Sigmoid colon (tissue), 7 donors: ENCODE measurements at regions of chr2 and their contacts with region 1.

Region 1: DNA sequence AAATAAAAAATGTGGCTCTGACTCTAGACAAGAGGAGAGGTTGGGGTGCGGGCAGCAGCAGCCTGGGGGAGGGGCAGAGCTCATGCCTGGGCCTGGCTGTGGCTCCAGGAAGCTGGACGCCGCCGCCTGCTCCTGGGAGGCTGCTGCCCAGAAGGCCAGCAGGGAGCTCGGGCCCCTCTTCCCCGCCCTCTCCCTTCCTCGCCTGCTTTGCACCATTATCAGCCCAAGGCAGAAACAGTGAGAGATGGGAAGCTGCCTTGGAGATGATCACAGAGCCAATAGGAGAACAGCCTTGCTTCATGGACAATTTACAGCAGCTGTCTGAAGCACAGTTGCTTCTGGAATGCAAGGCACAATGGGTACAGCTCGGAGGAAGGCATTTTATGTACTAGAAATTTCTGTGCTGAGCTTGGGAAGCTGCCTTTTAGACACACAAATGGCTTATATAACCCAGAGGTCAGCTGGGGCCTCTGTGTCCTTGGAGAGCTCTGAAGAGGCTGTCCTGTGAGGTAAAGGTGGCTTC is 55.3 kb upstream of the AFF3 start:
- DNase-seq: peak; percentile 81
- H3K4me3 ChIP-seq: peak overlapping the region in 1 of 4 donors; percentile 10
- H3K27ac ChIP-seq: peak overlapping the region; percentile 83 to 94 (median 85)
- H3K4me1 ChIP-seq: peaks cover 0 to 51% (median 38%) of the 10 kb centered on the region in 4 donors
- H3K27me3 ChIP-seq: no peaks in the 10 kb centered on the region
- CTCF ChIP-seq: no peak
- EP300 ChIP-seq: peak in 3 of 4 donors; percentile 19 to 68 (median 64)
- POLR2A ChIP-seq: no peak

Region 2: GRCh38 chr2:98598779-98599428 is 1598.8 kb before region 1 on chr2:
- intact Hi-C with region 1: no loop called
- DNase-seq: no peak
- H3K4me3 ChIP-seq: no peak overlapping the region
- H3K27ac ChIP-seq: no peak overlapping the region
- H3K4me1 ChIP-seq: no peaks in the 10 kb centered on the region
- H3K27me3 ChIP-seq: no peaks in the 10 kb centered on the region
- CTCF ChIP-seq: no peak
- EP300 ChIP-seq: no peak
- POLR2A ChIP-seq: no peak

Region 3: DNA sequence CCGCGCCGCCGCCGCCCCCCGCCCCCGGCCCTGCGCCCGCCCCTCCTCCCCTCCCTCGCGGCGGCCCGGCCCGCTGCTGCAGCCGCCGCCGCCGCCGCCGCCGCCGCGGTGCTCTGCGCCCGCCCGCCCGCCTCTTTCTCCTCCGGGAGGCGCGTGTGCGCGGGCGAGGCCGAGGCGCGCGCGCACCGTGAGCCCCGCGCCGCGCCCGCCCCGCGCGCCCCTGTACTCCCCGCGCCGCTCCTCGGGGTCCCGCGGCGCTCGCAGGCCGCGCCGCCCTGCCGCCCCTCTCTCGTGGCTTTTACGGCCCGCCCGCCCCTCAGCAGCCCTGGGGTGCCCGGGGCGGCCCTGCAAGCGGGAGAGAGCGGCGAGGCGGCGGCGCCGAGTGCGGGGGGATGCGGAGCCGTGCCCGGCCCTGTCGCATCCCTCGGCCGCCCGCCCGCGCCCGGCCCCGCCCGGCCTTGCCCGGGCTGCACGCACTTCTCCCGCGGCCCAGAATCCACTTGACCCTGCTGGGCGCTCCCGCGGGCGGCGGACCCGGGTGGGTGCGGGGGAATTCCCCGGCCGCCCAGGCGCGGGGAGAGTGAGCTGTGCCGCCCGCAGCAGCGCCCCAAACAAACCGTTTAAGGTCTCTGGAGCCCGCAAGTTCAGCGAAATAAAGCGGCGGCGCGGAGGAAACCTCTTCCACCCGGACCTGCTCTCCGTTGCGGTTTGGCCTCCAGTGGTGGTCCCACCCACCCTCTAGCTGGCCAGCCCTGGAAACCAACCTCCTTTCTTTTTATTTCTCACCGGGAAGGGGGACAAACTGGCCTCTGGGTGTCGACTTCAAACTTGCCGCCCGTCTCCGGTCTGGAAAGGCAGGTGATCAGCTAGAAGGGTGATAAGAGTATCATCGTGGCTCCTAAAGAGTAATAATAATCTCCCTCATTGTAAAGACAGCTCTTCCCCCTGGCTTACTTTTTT is 92.7 kb before region 1 on chr2:
- intact Hi-C with region 1: loop called (anchors 5 kb)
- DNase-seq: no peak
- H3K4me3 ChIP-seq: peak overlapping the region; percentile 40 to 77 (median 70)
- H3K27ac ChIP-seq: peak overlapping the region; percentile 76 to 80 (median 78)
- H3K4me1 ChIP-seq: peaks cover 0 to 38% (median 21%) of the 10 kb centered on the region in 4 donors
- H3K27me3 ChIP-seq: no peaks in the 10 kb centered on the region
- CTCF ChIP-seq: no peak
- EP300 ChIP-seq: no peak
- POLR2A ChIP-seq: no peak

Region 4: GRCh38 chr2:100213595-100213994 is 15.9 kb after region 1 on chr2:
- intact Hi-C with region 1: loop called (anchors 2 kb)
- DNase-seq: peak; percentile 80
- H3K4me3 ChIP-seq: no peak overlapping the region
- H3K27ac ChIP-seq: peak overlapping the region; percentile 70 to 82 (median 80)
- H3K4me1 ChIP-seq: peaks cover 0 to 32% (median 32%) of the 10 kb centered on the region in 4 donors
- H3K27me3 ChIP-seq: no peaks in the 10 kb centered on the region
- CTCF ChIP-seq: no peak
- EP300 ChIP-seq: no peak
- POLR2A ChIP-seq: no peak